PC-9 (cell line): ENCODE measurements at regions of chr22 and their contacts with region 1.

Region 1: GRCh38 chr22:17084554-17085276 is at the start of gene IL17RA:
- DNase-seq: peak; percentile 55 to 86
- H3K4me3 ChIP-seq: peak within 1 kb of the TSS; percentile 78
- H3K27ac ChIP-seq: no peak within 1 kb of the TSS
- H3K4me1 ChIP-seq: no peaks in the 10 kb centered on the region
- H3K27me3 ChIP-seq: no peaks in the 10 kb centered on the region
- CTCF ChIP-seq: no peak
- total RNA-seq, gene IL17RA: 5.0 and 8.2 TPM in 2 replicates

Region 2: GRCh38 chr22:16585876-16586569 is 498.7 kb before region 1 on chr22:
- CTCF ChIA-PET with region 1: no interaction called
- POLR2A ChIA-PET with region 1: no interaction called
- intact Hi-C with region 1: no loop called
- DNase-seq: no peak
- H3K4me3 ChIP-seq: no peak overlapping the region
- H3K27ac ChIP-seq: no peak overlapping the region
- H3K4me1 ChIP-seq: no peaks in the 10 kb centered on the region
- H3K27me3 ChIP-seq: 0 out of 2 replicates have a peak, but pooled peaks cover 6% of the 10 kb centered on the region
- CTCF ChIP-seq: no peak

Region 3: GRCh38 chr22:17057959-17058814 is 26.5 kb before region 1 on chr22:
- CTCF ChIA-PET with region 1: no interaction called
- POLR2A ChIA-PET with region 1: no interaction called
- intact Hi-C with region 1: no loop called
- DNase-seq: peak in 1 of 2 experiments; percentile 35
- H3K4me3 ChIP-seq: no peak overlapping the region
- H3K27ac ChIP-seq: no peak overlapping the region
- H3K4me1 ChIP-seq: no peaks in the 10 kb centered on the region
- H3K27me3 ChIP-seq: peaks cover 37% of the 10 kb centered on the region
- CTCF ChIP-seq: peak; percentile 85

Region 4: DNA sequence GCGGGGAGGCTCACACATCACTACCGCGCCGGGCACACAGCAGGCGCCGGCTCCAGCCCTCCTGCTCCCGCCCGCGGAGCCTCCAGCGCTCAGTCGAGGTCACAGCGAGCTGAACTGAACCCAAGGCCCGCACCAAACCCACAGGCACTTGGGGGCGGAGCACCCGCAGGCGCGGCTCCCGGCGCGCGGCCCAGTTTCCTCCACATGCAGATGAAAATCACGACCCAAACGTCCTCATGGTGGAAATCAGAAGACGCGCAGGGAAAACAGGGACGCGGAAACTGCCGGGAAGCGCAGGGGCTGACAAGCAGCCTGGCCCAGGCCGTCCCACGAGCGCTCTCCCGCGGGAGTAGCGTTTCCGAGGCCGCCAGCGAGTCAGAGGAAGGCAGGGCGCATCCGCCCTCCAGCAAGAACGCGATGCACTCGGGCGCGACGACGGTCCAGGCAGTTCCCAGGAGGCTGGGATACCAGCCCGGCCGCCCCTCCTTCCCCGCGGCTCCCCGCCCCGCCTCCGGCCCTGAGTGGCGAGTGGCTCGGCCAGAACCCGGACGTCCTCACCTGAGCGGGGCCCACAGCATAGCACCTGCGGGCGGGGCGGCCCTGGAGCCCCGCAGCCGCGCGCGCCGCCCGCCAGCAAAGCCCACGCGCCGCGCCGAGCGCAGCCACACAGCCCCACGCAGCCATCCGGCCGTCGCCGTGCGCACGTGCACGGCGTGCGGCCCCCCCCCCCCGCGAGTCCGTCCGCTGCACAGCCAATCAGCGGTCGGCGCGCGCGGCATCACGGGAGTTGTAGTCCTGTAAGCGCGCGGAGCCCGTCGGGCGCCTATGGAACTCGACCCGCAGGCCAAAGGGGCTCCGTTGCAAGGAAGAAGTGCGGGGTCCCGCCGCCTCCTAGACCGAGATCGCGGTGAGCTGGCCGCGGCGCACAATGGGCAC is 74.1 kb after region 1 on chr22 and contains the start of gene HDHD5:
- CTCF ChIA-PET with region 1: no interaction called
- POLR2A ChIA-PET with region 1: no interaction called
- intact Hi-C with region 1: loop called (anchors 1 kb)
- DNase-seq: peak; percentile 69 to 84
- H3K4me3 ChIP-seq: peak within 1 kb of the TSS; percentile 88
- H3K27ac ChIP-seq: peak within 1 kb of the TSS; percentile 58
- H3K4me1 ChIP-seq: 0 out of 2 replicates have a peak, but pooled peaks cover 9% of the 10 kb centered on the region
- H3K27me3 ChIP-seq: no peaks in the 10 kb centered on the region
- CTCF ChIP-seq: no peak
- total RNA-seq, gene HDHD5: 26.5 and 31.1 TPM in 2 replicates